ENCODE measurements at regions of chr5 and their contacts with region 1.

Region 1: DNA sequence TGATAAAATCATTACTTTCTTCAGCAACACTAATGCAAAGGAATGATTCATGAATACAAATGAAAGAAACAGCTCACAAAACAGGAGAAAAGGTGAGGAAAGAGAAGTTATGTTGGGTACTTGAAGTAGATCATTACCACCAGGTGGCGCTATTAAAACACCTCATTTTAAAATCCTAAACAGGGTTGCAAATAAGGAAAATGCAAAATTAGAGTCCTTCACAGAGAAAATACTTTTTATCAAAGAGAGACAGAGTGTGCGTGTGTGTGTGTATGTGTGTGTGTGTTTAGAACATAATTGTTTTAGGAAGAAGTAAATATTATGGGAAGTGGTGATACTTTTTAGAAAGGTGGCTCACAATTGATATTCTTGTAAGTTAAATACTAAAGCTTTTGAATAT is 49.5 kb upstream of the CD180 start:
- DNase-seq: no peak
- H3K4me3 ChIP-seq: no peak overlapping the region
- H3K27ac ChIP-seq: peak overlapping the region; percentile 40 to 83 (median 78)
- H3K4me1 ChIP-seq: peaks cover 27 to 68% (median 54%) of the 10 kb centered on the region in 4 donors
- H3K27me3 ChIP-seq: no peaks in the 10 kb centered on the region
- CTCF ChIP-seq: peak; percentile 68 to 81 (median 72)
- EP300 ChIP-seq: no peak
- POLR2A ChIP-seq: no peak

Region 2: GRCh38 chr5:67196537-67197059 is 49.5 kb before region 1 on chr5 and contains the start of gene CD180:
- intact Hi-C with region 1: no loop called
- DNase-seq: no peak
- H3K4me3 ChIP-seq: peak within 1 kb of the TSS in 1 of 4 donors; percentile 20
- H3K27ac ChIP-seq: no peak within 1 kb of the TSS
- H3K4me1 ChIP-seq: peaks cover 0 to 23% (median 18%) of the 10 kb centered on the region in 4 donors
- H3K27me3 ChIP-seq: no peaks in the 10 kb centered on the region
- CTCF ChIP-seq: no peak
- EP300 ChIP-seq: no peak
- POLR2A ChIP-seq: no peak
- total RNA-seq, gene CD180: 0.42 to 1.8 (median 0.67) TPM

Region 3: GRCh38 chr5:67648201-67648671 is 402.1 kb after region 1 on chr5:
- intact Hi-C with region 1: loop called (anchors 5 kb)
- DNase-seq: peak; percentile 94
- H3K4me3 ChIP-seq: no peak overlapping the region
- H3K27ac ChIP-seq: peak overlapping the region; percentile 72 to 81 (median 77)
- H3K4me1 ChIP-seq: peaks cover 21 to 59% (median 43%) of the 10 kb centered on the region in 4 donors
- H3K27me3 ChIP-seq: no peaks in the 10 kb centered on the region
- CTCF ChIP-seq: no peak
- EP300 ChIP-seq: peak; percentile 11
- POLR2A ChIP-seq: no peak

Region 4: DNA sequence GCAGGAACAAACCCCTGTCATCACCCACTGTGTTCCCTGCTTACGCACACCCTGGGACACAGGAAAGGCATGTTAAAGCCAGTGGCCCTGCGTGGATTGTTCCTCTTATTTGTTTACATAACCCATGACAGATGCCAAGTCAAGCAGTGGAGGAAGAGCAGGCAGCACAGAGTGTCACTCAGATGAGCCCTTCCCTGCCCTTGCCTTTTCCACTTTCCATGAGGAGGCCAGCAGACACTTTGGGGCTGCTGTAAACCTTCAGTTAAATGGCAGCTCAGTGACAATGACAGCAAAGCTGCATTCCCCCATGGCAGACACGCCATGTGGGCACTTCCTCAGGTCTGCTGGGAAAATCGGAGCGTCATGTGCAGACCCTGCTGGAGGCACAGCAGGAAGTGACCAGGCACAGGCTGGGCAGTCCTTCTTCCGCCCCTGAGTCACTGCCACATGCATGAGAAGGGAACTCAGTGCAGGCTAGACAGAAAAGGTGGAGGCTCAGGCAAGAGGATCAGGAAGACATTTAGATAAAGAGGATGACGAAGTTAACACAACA is 752.7 kb after region 1 on chr5:
- intact Hi-C with region 1: loop called (anchors 10 kb)
- DNase-seq: peak; percentile 93
- H3K4me3 ChIP-seq: no peak overlapping the region
- H3K27ac ChIP-seq: peak overlapping the region; percentile 75 to 86 (median 78)
- H3K4me1 ChIP-seq: peaks cover 7 to 40% (median 33%) of the 10 kb centered on the region in 4 donors
- H3K27me3 ChIP-seq: no peaks in the 10 kb centered on the region
- CTCF ChIP-seq: no peak
- EP300 ChIP-seq: peak; percentile 83
- POLR2A ChIP-seq: no peak

Region 5: DNA sequence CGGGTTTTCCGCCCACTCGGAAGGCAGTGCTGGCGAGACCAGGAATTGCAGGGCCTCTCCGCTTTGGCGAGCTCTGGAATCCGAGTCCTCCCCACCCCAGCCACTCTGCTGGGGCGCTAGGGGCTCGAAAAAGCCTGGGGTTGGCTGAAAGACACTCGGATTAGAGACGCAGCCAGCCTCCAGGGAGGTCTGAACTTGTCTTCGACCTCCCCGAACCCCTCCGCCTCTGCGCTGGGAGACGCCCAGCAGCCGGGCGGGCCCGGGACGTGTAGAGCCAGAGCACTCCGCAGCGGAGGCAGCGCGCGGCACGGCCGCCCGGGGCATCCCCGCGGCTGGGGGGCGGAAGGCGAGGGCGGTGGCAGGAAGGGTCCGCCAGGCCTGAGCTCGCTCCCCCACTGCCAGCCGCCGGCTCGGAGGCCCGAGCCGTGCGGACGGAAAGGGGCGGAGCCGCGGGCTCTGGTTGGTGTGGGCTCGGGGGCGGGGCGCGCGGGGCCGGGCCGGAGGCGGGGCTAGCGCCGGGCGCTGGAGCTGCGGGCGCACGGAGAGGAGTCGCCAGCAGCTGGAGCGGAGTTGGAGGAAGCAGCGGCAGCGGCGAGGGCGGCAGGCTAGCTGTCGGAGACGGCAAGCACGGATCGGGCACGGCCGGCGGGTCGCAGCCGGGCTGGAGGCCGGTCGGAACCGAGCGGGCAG is 969.2 kb after region 1 on chr5 and contains the start of gene PIK3R1:
- intact Hi-C with region 1: loop called (anchors 5 kb)
- DNase-seq: peak; percentile 99
- H3K4me3 ChIP-seq: peak within 1 kb of the TSS; percentile 87 to 98 (median 94)
- H3K27ac ChIP-seq: peak within 1 kb of the TSS; percentile 93 to 98 (median 98)
- H3K4me1 ChIP-seq: peaks cover 6 to 31% (median 24%) of the 10 kb centered on the region in 4 donors
- H3K27me3 ChIP-seq: peaks cover 0 to 6% (median 0%) of the 10 kb centered on the region in 4 donors
- CTCF ChIP-seq: peak; percentile 31 to 68 (median 39)
- EP300 ChIP-seq: no peak
- POLR2A ChIP-seq: peak; percentile 69
- total RNA-seq, gene PIK3R1: 244 to 563 (median 329) TPM